Endothelial cell of umbilical vein (primary cell): ENCODE measurements at regions of chr7 and their contacts with region 1.

Region 1: DNA sequence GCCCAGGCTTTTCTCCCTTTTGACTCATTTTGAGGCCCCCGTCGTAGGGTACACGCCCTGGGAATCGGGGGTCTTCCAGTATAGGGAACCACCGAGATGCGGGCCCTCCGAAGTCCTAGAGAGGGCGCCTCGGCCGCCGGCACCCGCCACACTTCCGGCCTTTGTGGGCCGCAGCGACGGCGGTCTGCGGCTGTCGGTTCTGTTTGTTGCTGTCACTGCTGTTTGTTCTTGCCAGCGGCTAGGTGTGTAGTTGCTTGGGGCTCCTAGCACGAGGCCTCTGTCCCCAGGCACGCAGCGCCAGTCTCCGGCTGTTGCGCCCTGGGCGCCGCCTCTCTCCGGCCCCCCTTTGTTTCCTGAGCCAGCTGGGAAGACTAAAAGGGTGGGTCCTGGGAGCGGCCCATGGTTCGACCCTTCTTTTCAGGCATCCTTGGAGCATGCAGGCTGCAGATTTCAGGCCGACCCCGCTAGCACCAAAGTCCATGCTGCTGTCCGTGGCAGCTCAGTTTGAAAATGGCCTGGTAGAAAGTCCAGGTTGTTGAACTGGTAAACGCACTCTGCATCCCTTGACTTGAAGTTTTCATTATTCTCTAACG is 17.8 kb upstream of the ZKSCAN1 start:
- DNase-seq: peak; percentile 55
- H3K4me3 ChIP-seq: peak overlapping the region; percentile 6 to 53 (median 47)
- H3K27ac ChIP-seq: no peak overlapping the region
- H3K4me1 ChIP-seq: no peaks in the 10 kb centered on the region
- H3K27me3 ChIP-seq: no peaks in the 10 kb centered on the region
- CTCF ChIP-seq: peak in 1 of 2 donors; percentile 32
- POLR2A ChIP-seq: peak; percentile 79

Region 2: GRCh38 chr7:100015232-100016209 is 17.9 kb after region 1 on chr7 and contains the start of gene ZKSCAN1:
- CTCF ChIA-PET with region 1: interaction called, 19 read pairs
- POLR2A ChIA-PET with region 1: interaction called, 4 read pairs
- dilution Hi-C with region 1: no loop called
- intact Hi-C with region 1: loop called (anchors 1 kb)
- DNase-seq: peak; percentile 89
- H3K4me3 ChIP-seq: peak within 1 kb of the TSS; percentile 92 to 100 (median 97)
- H3K27ac ChIP-seq: peak within 1 kb of the TSS; percentile 98
- H3K4me1 ChIP-seq: peaks cover 12% of the 10 kb centered on the region
- H3K27me3 ChIP-seq: no peaks in the 10 kb centered on the region
- CTCF ChIP-seq: no peak
- POLR2A ChIP-seq: peak; percentile 89
- total RNA-seq, gene ZKSCAN1: 52.8 and 57.8 TPM in 2 replicates

Region 3: GRCh38 chr7:100021297-100021696 is 23.7 kb after region 1 on chr7:
- CTCF ChIA-PET with region 1: interaction called, 19 read pairs
- POLR2A ChIA-PET with region 1: no interaction called
- dilution Hi-C with region 1: no loop called
- intact Hi-C with region 1: no loop called
- DNase-seq: no peak
- H3K4me3 ChIP-seq: no peak overlapping the region
- H3K27ac ChIP-seq: no peak overlapping the region
- H3K4me1 ChIP-seq: peaks cover 8% of the 10 kb centered on the region
- H3K27me3 ChIP-seq: no peaks in the 10 kb centered on the region
- CTCF ChIP-seq: no peak
- POLR2A ChIP-seq: no peak

Region 4: GRCh38 chr7:100081535-100082102 is 84.0 kb after region 1 on chr7 and contains the start of gene ZNF3:
- CTCF ChIA-PET with region 1: interaction called, 17 read pairs
- POLR2A ChIA-PET with region 1: interaction called, 3 read pairs
- dilution Hi-C with region 1: no loop called
- intact Hi-C with region 1: loop called (anchors 1 kb)
- DNase-seq: peak; percentile 100
- H3K4me3 ChIP-seq: peak within 1 kb of the TSS; percentile 85 to 92 (median 89)
- H3K27ac ChIP-seq: peak within 1 kb of the TSS; percentile 78
- H3K4me1 ChIP-seq: peaks cover 19% of the 10 kb centered on the region
- H3K27me3 ChIP-seq: no peaks in the 10 kb centered on the region
- CTCF ChIP-seq: peak; percentile 96 to 98
- POLR2A ChIP-seq: peak; percentile 86
- total RNA-seq, gene ZNF3: 30.9 and 31.1 TPM in 2 replicates

Region 5: GRCh38 chr7:100126931-100127865 is 129.6 kb after region 1 on chr7 and contains the start of gene MBLAC1:
- CTCF ChIA-PET with region 1: interaction called, 14 read pairs
- POLR2A ChIA-PET with region 1: no interaction called
- dilution Hi-C with region 1: no loop called
- intact Hi-C with region 1: loop called (anchors 5 kb)
- DNase-seq: peak; percentile 88
- H3K4me3 ChIP-seq: peak within 1 kb of the TSS; percentile 86 to 96 (median 93)
- H3K27ac ChIP-seq: peak within 1 kb of the TSS; percentile 94
- H3K4me1 ChIP-seq: peaks cover 11% of the 10 kb centered on the region
- H3K27me3 ChIP-seq: no peaks in the 10 kb centered on the region
- CTCF ChIP-seq: no peak
- POLR2A ChIP-seq: peak; percentile 92
- total RNA-seq, gene MBLAC1: 1.3 and 1.8 TPM in 2 replicates